OCI-LY7 (cell line): ENCODE measurements at regions of chr15 and their contacts with region 1.

Region 1: DNA sequence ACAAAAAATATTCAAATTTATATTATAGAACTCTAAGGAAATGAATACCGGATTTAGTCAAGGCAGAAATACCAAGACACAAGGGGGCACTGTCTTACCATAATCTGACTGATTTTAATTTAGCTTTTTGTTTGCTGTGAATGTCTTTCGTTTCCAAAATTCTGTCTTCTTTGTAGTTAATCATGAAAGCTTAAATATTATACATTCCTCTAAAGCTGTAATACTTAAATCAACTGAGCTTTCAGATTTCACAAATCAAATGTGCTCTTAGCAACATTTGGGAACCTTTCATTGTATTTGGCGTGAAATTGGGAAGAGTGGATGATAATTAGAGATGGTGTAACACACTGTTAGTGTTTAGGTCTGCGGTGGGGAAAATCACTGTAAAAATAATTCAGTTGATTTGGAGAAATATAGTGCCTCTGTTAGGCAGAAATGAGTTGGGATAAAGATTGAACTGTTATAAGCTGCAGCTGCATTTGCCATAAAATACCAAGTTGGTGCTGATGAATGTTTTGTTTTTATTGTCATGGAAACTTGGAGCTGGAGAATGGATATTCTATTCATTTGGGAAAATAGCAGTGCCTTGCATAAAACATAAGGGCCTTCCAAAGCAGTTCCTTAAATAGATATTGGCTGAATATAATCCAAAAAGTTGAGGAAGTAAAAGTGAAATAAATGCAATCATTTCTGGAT is 228.2 kb downstream of the TCF12 start:
- DNase-seq: peak; percentile 53
- H3K4me3 ChIP-seq: no peak overlapping the region
- H3K27ac ChIP-seq: no peak overlapping the region
- H3K4me1 ChIP-seq: peaks cover 3% of the 10 kb centered on the region
- CTCF ChIP-seq: peak; percentile 91

Region 2: DNA sequence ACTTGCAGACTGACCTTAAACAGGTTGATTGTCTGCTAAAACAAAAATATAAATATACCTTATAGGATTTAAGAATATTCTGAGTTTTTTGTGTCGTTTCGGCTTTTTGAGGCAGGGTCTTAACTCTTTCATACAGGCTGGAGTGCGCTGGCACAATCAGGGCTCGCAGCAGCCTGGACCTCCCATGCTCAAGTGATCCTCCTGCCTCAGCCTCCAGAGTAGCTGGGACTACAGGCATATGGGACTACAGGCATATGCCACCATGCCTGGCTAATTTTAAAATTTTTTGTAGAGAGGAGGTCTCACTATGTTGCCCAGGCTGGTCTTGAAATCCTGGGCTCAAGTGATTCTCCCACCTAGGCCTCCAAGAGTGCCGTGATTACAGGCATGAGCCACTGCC is 114.3 kb before region 1 on chr15:
- CTCF ChIA-PET with region 1: no interaction called
- POLR2A ChIA-PET with region 1: no interaction called
- intact Hi-C with region 1: no loop called
- DNase-seq: no peak
- H3K4me3 ChIP-seq: no peak overlapping the region
- H3K27ac ChIP-seq: no peak overlapping the region
- H3K4me1 ChIP-seq: peaks cover 6% of the 10 kb centered on the region
- CTCF ChIP-seq: no peak

Region 3: GRCh38 chr15:57213862-57214261 is 67.2 kb after region 1 on chr15:
- CTCF ChIA-PET with region 1: no interaction called
- POLR2A ChIA-PET with region 1: interaction called, 5 read pairs
- intact Hi-C with region 1: loop called (anchors 5 kb)
- DNase-seq: peak; percentile 48
- H3K4me3 ChIP-seq: no peak overlapping the region
- H3K27ac ChIP-seq: no peak overlapping the region
- H3K4me1 ChIP-seq: peaks cover 7% of the 10 kb centered on the region
- CTCF ChIP-seq: peak; percentile 77

Region 4: DNA sequence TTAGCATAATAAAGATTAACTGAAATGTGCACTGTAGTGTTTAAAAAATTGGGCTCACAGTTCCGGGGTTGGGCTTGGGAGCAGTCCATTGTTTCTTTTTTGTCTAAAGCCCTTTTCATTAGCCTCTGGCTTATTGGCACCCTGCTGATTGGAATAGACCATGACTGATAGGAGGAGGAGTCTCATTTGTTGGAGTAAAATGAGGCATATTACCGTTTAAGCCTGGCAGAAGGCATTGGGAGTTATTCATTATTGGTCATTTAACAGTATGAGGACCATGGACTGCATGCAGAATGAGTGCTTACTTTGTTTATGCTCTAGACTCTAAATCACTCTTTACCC is 90.6 kb after region 1 on chr15:
- CTCF ChIA-PET with region 1: no interaction called
- POLR2A ChIA-PET with region 1: no interaction called
- intact Hi-C with region 1: no loop called
- DNase-seq: no peak
- H3K4me3 ChIP-seq: no peak overlapping the region
- H3K27ac ChIP-seq: no peak overlapping the region
- H3K4me1 ChIP-seq: no peaks in the 10 kb centered on the region
- CTCF ChIP-seq: no peak

Region 5: GRCh38 chr15:57306161-57306943 is 159.7 kb after region 1 on chr15:
- CTCF ChIA-PET with region 1: interaction called, 6 read pairs
- POLR2A ChIA-PET with region 1: interaction called, 3 read pairs
- intact Hi-C with region 1: loop called (anchors 1 kb)
- DNase-seq: peak; percentile 81
- H3K4me3 ChIP-seq: peak overlapping the region; percentile 63
- H3K27ac ChIP-seq: no peak overlapping the region
- H3K4me1 ChIP-seq: peaks cover 9% of the 10 kb centered on the region
- CTCF ChIP-seq: peak; percentile 94